ENCODE measurements at regions of chr3 and their contacts with region 1.

Region 1: DNA sequence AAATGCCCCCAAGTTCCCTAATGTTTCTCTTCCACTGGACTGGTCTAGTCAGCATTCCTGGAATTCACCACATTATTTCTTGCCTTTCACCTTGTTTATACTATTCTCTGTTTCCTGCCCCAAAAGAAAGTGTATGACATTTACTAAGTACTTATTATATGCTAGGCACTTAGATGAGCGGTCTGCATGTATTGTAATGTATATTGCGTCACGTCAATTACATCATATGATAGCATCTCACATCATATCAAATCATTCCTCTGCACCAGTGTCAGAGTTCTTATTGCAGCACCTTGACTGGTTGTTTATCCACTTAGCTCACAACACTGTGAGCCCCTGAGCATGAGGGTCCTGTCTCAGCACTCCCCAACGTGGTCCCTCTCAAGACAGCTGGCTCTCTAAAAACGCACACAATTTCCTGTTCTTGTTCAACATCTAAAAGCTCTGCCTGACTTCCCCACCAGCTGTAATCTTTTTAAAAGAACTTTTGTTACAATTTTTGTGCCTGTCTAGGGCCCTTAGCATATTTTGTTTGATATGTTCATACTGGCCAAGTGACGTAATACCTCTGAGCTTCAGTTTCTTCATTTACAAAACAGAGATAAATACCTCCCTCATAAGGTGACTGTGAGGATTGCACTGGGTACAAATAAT is 58.8 kb downstream of the ARHGAP31 start:
- DNase-seq: peak in 9 of 35 experiments; percentile 3 to 72 (median 14)
- ATAC-seq: peak; percentile 46 to 88 (median 62)
- H3K4me3 ChIP-seq: no peak overlapping the region
- H3K4me3 Mint-ChIP-seq: peak overlapping the region in 1 of 3 donors; percentile 43
- H3K27ac ChIP-seq: no peak overlapping the region
- H3K27ac Mint-ChIP-seq: peak overlapping the region; percentile 42 to 48
- H3K4me1 ChIP-seq: peaks cover 24 to 38% of the 10 kb centered on the region in 2 experiments
- H3K4me1 Mint-ChIP-seq: peaks cover 31 to 44% (median 37%) of the 10 kb centered on the region in 3 donors
- H3K27me3 ChIP-seq: no peaks in the 10 kb centered on the region
- H3K27me3 Mint-ChIP-seq: no peaks in the 10 kb centered on the region

Region 2: DNA sequence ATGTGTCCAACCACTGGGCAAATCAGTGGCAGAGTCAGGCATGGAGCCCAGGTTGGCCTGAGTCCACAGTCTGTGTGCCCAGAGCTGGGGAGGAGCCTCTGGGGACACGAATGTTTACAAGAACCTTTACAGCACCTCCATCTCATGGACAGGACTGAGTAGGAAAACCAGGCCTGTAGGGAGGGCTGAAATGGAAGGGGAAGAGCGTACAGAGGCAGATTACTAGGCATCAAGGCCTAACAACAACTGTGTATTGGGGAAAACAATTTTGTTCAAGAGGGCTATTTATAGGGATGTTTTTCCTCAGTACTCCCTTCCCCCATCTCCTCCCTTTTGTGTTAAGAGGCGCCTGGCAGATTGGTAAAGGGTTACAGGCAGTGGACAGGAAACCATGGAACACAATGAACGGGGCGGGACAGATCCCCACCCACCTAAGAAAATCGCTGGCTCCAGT is 73.8 kb before region 1 on chr3:
- CTCF ChIA-PET with region 1: interaction called, 22 to 27 read pairs
- POLR2A ChIA-PET with region 1: no interaction called
- DNase-seq: no peak
- ATAC-seq: no peak
- H3K4me3 ChIP-seq: no peak overlapping the region
- H3K4me3 Mint-ChIP-seq: no peak overlapping the region
- H3K27ac ChIP-seq: no peak overlapping the region
- H3K27ac Mint-ChIP-seq: no peak overlapping the region
- H3K4me1 ChIP-seq: peaks cover 0 to 8% of the 10 kb centered on the region in 2 experiments
- H3K4me1 Mint-ChIP-seq: peaks cover 3 to 8% (median 3%) of the 10 kb centered on the region in 3 donors
- H3K27me3 ChIP-seq: peaks cover 0 to 3% of the 10 kb centered on the region in 2 experiments
- H3K27me3 Mint-ChIP-seq: no peaks in the 10 kb centered on the region

Region 3: GRCh38 chr3:119293871-119294695 is 58.9 kb before region 1 on chr3 and contains the start of gene ARHGAP31:
- CTCF ChIA-PET with region 1: interaction called, 8 to 22 read pairs
- POLR2A ChIA-PET with region 1: interaction called in 1 of 2 experiments, 6 read pairs
- DNase-seq: peak; percentile 60 to 94 (median 85)
- ATAC-seq: peak; percentile 67 to 76 (median 72)
- H3K4me3 ChIP-seq: peak within 1 kb of the TSS; percentile 74 to 81
- H3K4me3 Mint-ChIP-seq: peak within 1 kb of the TSS; percentile 85 to 93 (median 90)
- H3K27ac ChIP-seq: peak within 1 kb of the TSS; percentile 97
- H3K27ac Mint-ChIP-seq: peak within 1 kb of the TSS; percentile 79 to 94
- H3K4me1 ChIP-seq: peaks cover 15 to 53% of the 10 kb centered on the region in 2 experiments
- H3K4me1 Mint-ChIP-seq: peaks cover 53 to 67% (median 65%) of the 10 kb centered on the region in 3 donors
- H3K27me3 ChIP-seq: peaks cover 0 to 8% of the 10 kb centered on the region in 2 experiments
- H3K27me3 Mint-ChIP-seq: no peaks in the 10 kb centered on the region
- total RNA-seq, gene ARHGAP31: 2.7 to 5.1 (median 3.4) TPM

Measured in T-cell (primary cell).